Natural killer cell (primary cell): ENCODE measurements at regions of chr19 and their contacts with region 1.

Region 1: DNA sequence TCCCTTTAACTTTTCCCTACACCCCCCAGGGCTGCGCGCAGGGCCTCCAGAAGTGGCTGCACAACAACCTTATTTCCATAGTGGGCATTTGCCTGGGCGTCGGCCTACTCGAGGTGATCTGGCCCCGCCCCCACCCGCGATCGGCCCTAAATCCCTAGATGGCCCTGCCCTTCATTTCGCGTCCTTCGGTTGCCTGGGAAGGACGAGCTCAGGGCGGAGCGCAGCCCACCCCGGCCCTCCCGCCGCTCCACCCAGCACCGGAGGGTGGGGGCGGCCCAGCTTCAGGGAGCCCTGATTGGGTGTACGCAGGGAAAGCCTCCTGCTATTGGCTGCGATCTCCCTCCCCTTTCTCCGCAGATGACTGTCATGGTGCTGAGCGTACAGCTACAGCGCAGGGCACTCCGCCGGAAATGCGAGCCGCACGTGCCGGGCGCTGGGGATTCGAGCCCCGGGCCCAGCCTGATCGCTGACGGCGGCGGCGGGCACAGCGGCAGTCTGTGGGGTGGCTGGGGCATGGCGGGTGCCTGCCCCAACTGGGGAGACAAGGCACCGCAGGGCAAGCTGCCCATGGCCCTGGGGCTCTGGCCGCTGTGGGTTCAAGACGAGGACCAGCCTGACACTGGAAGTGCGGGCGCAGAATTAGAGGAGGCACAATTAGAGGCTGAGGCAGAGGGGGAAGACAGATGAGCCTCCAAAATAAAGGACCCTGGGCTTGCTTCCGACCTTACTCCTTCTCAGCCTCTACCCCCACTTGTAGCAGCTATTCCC is 4.3 kb downstream of the CD37 start:
- DNase-seq: no peak
- ATAC-seq: no peak
- H3K4me3 ChIP-seq: peak overlapping the region; percentile 8
- H3K4me3 Mint-ChIP-seq: no peak overlapping the region
- H3K27ac ChIP-seq: peak overlapping the region; percentile 67
- H3K27ac Mint-ChIP-seq: peak overlapping the region; percentile 87 to 94
- H3K4me1 ChIP-seq: peaks cover 87% of the 10 kb centered on the region
- H3K4me1 Mint-ChIP-seq: peaks cover 56 to 71% of the 10 kb centered on the region in 2 donors
- H3K27me3 ChIP-seq: no peaks in the 10 kb centered on the region
- H3K27me3 Mint-ChIP-seq: no peaks in the 10 kb centered on the region
- CTCF ChIP-seq: no peak

Region 2: GRCh38 chr19:49301165-49301865 is 38.2 kb before region 1 on chr19:
- intact Hi-C with region 1: loop called (anchors 5 kb)
- DNase-seq: peak; percentile 78 to 88
- ATAC-seq: peak; percentile 89 to 100 (median 92)
- H3K4me3 ChIP-seq: no peak overlapping the region
- H3K4me3 Mint-ChIP-seq: no peak overlapping the region
- H3K27ac ChIP-seq: no peak overlapping the region
- H3K27ac Mint-ChIP-seq: no peak overlapping the region
- H3K4me1 ChIP-seq: peaks cover 10% of the 10 kb centered on the region
- H3K4me1 Mint-ChIP-seq: peaks cover 0 to 9% of the 10 kb centered on the region in 2 donors
- H3K27me3 ChIP-seq: no peaks in the 10 kb centered on the region
- H3K27me3 Mint-ChIP-seq: no peaks in the 10 kb centered on the region
- CTCF ChIP-seq: peak; percentile 89

Region 3: DNA sequence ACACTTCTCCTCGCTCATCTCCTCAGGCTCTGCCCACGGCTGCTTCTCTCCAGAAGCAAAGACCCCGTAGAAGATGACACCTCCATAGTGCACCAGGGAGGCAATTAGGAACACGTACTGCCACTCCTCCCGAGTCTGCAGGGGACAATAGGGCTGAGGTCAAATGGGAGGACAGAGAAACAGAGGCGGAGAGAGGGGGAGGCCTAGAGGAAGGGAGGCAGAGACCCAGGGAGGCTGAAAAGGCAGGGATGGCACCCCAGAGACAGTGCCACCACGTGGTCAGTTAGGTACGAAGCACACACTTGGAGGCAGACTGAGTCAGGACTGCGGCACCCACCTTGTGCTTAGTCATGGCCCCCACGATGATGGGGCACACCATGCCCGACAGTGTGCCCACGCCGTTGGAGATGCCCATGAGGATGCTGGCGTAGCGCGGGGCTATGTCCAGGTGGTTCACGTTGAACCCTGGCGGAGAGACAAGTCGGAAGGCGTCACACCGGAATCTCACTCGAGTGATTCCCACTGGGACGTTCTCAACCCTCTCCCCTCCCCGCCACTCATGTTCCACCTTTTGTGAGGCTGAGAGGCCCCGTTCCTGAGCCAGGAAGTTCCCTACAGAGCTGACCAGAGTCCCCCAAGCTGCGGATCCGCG is 91.3 kb after region 1 on chr19:
- intact Hi-C with region 1: no loop called
- DNase-seq: peak in 1 of 2 donors; percentile 57
- ATAC-seq: no peak
- H3K4me3 ChIP-seq: no peak overlapping the region
- H3K4me3 Mint-ChIP-seq: no peak overlapping the region
- H3K27ac ChIP-seq: no peak overlapping the region
- H3K27ac Mint-ChIP-seq: no peak overlapping the region
- H3K4me1 ChIP-seq: peaks cover 45% of the 10 kb centered on the region
- H3K4me1 Mint-ChIP-seq: peaks cover 37 to 52% of the 10 kb centered on the region in 2 donors
- H3K27me3 ChIP-seq: peaks cover 84% of the 10 kb centered on the region
- H3K27me3 Mint-ChIP-seq: peaks cover 77 to 87% of the 10 kb centered on the region in 2 donors
- CTCF ChIP-seq: no peak

Region 4: GRCh38 chr19:49468746-49469447 is 129.4 kb after region 1 on chr19:
- intact Hi-C with region 1: loop called (anchors 1 kb)
- DNase-seq: peak; percentile 81 to 97
- ATAC-seq: peak; percentile 64 to 87 (median 72)
- H3K4me3 ChIP-seq: no peak overlapping the region
- H3K4me3 Mint-ChIP-seq: peak overlapping the region; percentile 86
- H3K27ac ChIP-seq: peak overlapping the region; percentile 97
- H3K27ac Mint-ChIP-seq: peak overlapping the region; percentile 92 to 97
- H3K4me1 ChIP-seq: peaks cover 60% of the 10 kb centered on the region
- H3K4me1 Mint-ChIP-seq: peaks cover 21 to 37% of the 10 kb centered on the region in 2 donors
- H3K27me3 ChIP-seq: no peaks in the 10 kb centered on the region
- H3K27me3 Mint-ChIP-seq: no peaks in the 10 kb centered on the region
- CTCF ChIP-seq: no peak